Activated CD8-positive, alpha-beta T cell treated with anti-CD3 and anti-CD28 coated beads for 36 hours (primary cell): ENCODE measurements at regions of chr17 and their contacts with region 1.

Region 1: GRCh38 chr17:64635647-64636307 is 26.3 kb downstream of the SMURF2 start:
- DNase-seq: peak; percentile 45
- ATAC-seq: peak; percentile 69
- H3K4me3 Mint-ChIP-seq: peak overlapping the region; percentile 5
- H3K27ac Mint-ChIP-seq: peak overlapping the region; percentile 90
- H3K4me1 Mint-ChIP-seq: peaks cover 54% of the 10 kb centered on the region
- H3K27me3 Mint-ChIP-seq: no peaks in the 10 kb centered on the region
- CTCF ChIP-seq: no peak

Region 2: GRCh38 chr17:64599187-64599676 is 36.5 kb before region 1 on chr17:
- CTCF ChIA-PET with region 1: no interaction called
- POLR2A ChIA-PET with region 1: interaction called, 5 read pairs
- intact Hi-C with region 1: loop called (anchors 5 kb)
- DNase-seq: peak; percentile 75
- ATAC-seq: peak; percentile 99
- H3K4me3 Mint-ChIP-seq: peak overlapping the region; percentile 73
- H3K27ac Mint-ChIP-seq: peak overlapping the region; percentile 87
- H3K4me1 Mint-ChIP-seq: peaks cover 43% of the 10 kb centered on the region
- H3K27me3 Mint-ChIP-seq: no peaks in the 10 kb centered on the region
- CTCF ChIP-seq: no peak

Region 3: GRCh38 chr17:64718059-64718458 is 82.3 kb after region 1 on chr17:
- CTCF ChIA-PET with region 1: no interaction called
- POLR2A ChIA-PET with region 1: no interaction called
- intact Hi-C with region 1: no loop called
- DNase-seq: no peak
- ATAC-seq: peak; percentile 72
- H3K4me3 Mint-ChIP-seq: no peak overlapping the region
- H3K27ac Mint-ChIP-seq: no peak overlapping the region
- H3K4me1 Mint-ChIP-seq: peaks cover 10% of the 10 kb centered on the region
- H3K27me3 Mint-ChIP-seq: no peaks in the 10 kb centered on the region
- CTCF ChIP-seq: no peak

Region 4: GRCh38 chr17:64787921-64788271 is 152.1 kb after region 1 on chr17:
- CTCF ChIA-PET with region 1: no interaction called
- POLR2A ChIA-PET with region 1: no interaction called
- intact Hi-C with region 1: no loop called
- DNase-seq: no peak
- ATAC-seq: no peak
- H3K4me3 Mint-ChIP-seq: no peak overlapping the region
- H3K27ac Mint-ChIP-seq: no peak overlapping the region
- H3K4me1 Mint-ChIP-seq: peaks cover 15% of the 10 kb centered on the region
- H3K27me3 Mint-ChIP-seq: no peaks in the 10 kb centered on the region
- CTCF ChIP-seq: no peak